RWPE1 (cell line): ENCODE measurements at regions of chr4 and their contacts with region 1.

Region 1: GRCh38 chr4:75724066-75724866 is at the start of gene USO1:
- DNase-seq: peak; percentile 95
- H3K27ac ChIP-seq: peak within 1 kb of the TSS; percentile 91
- CTCF ChIP-seq: peak; percentile 87

Region 2: DNA sequence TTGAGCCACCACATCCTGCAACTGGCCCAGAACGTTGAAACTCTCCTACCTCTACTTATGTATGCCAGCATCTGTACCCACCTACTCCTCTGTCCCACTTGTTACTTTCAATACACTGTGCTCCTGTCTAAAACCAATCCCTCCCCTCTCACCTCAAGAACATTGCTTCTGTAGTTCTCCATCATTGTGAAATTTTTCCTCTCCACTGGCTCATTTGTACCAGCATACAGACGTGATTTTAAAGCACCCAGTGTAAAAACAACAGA is 25.4 kb before region 1 on chr4:
- CTCF ChIA-PET with region 1: no interaction called
- POLR2A ChIA-PET with region 1: no interaction called
- DNase-seq: no peak
- H3K27ac ChIP-seq: no peak overlapping the region
- CTCF ChIP-seq: no peak

Region 3: GRCh38 chr4:75710246-75710645 is 14.0 kb before region 1 on chr4:
- CTCF ChIA-PET with region 1: interaction called, 10 read pairs
- POLR2A ChIA-PET with region 1: no interaction called
- DNase-seq: no peak
- H3K27ac ChIP-seq: no peak overlapping the region
- CTCF ChIP-seq: no peak

Region 4: DNA sequence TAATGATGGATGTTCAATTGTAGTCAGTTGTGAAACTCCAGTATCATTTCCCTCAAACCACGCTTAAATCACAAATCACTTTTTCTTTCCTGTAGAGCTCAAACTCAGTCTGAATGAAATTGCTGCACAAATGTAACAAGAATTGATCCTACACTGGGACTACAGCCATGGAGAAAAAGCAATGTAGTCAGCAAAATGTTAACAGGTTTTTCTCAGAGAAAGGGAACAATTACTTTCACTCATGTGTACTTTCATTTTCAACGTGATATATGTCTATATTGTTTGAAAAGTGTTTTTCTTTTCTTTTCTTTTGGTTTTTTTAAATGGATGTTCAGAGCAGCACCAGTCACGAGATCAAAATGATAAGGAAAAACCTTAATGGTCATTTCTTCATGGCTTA is 243.8 kb after region 1 on chr4:
- CTCF ChIA-PET with region 1: no interaction called
- POLR2A ChIA-PET with region 1: no interaction called
- DNase-seq: no peak
- H3K27ac ChIP-seq: no peak overlapping the region
- CTCF ChIP-seq: no peak